PC-3 (cell line): ENCODE measurements at regions of chr2 and their contacts with region 1.

Region 1: DNA sequence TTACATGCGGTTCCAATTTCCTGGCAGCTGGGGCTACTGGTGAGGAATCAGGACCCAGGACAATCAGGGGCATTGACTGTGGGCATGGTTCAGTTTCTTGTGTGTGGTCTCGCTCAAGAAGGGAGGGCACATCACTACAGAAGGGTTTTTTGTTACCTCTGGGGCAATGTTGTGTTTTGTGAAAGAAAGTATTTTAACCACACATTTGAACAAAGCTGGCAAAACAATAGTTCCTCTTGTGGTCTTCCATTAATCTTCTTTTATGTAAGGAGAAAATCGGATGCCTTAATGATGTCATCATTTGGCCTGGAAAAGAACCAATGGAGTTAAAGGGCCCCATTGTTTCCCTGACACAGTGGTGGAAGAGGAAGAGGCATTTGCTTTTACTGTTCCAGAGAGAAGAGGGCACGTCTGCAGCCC is 197.4 kb downstream of the SH3BP4 start:
- DNase-seq: no peak
- ATAC-seq: no peak; the same call in 1 of the 2 replicates
- H3K4me3 ChIP-seq: no peak overlapping the region
- H3K27ac ChIP-seq: no peak overlapping the region
- H3K4me1 ChIP-seq: peaks cover 7% of the 10 kb centered on the region; the same call in 1 of the 2 replicates
- H3K27me3 ChIP-seq: no peaks in the 10 kb centered on the region
- CTCF ChIP-seq: no peak

Region 2: DNA sequence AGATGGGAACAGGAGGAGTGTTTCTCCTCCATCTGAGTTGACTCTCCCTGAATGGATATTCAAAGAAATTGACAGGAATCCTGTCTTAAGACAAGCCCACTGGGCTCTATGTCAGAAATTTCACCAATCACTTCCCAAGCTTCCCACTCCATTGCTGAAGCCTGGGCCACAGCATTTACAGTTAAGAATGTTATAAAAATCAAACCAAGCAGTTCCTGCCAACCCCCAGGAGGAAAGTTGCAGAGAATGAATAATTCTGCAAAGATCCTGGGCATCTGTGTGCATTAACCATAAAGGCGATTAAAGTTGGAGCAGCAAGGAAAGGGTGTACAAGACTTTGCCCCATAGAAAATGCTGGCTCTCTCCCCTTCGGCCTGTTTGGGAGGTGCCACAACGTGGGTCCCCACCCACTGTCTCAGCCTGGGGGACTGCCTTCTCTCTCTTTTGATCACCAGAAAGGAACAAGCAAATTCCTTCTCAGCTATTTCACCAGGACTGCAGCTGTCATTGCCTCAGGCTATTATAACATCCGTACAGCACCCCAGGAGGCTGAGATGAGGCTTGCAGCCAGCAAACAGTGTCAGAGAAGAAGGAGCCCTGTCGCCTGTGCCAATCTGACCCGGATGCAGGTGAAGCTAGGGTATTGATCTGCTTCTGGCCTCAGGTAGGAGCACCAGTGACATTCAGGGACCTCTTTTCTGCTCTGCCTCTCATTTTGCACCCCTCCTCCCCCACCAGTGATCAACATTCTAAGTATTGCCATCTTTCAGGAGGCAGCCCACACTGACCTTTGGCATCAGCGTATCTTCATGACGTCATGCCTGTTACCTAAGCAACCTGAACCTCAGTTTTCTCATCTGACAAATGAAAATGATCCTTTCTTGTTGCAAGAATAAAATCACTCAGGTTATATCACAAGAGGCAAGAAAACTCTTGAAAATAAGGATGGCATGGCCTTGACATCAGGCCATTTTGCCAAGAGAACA is 21.6 kb after region 1 on chr2:
- CTCF ChIA-PET with region 1: no interaction called
- POLR2A ChIA-PET with region 1: no interaction called
- intact Hi-C with region 1: loop called (anchors 1 kb)
- DNase-seq: peak; percentile 87
- ATAC-seq: peak; percentile 71
- H3K4me3 ChIP-seq: peak overlapping the region; percentile 34; the same call in 1 of the 2 replicates
- H3K27ac ChIP-seq: peak overlapping the region; percentile 98
- H3K4me1 ChIP-seq: peaks cover 36% of the 10 kb centered on the region
- H3K27me3 ChIP-seq: no peaks in the 10 kb centered on the region
- CTCF ChIP-seq: peak; percentile 43

Region 3: GRCh38 chr2:235238537-235238936 is 89.3 kb after region 1 on chr2:
- CTCF ChIA-PET with region 1: no interaction called
- POLR2A ChIA-PET with region 1: no interaction called
- intact Hi-C with region 1: no loop called
- DNase-seq: peak; percentile 10
- ATAC-seq: peak; percentile 29; the same call in 1 of the 2 replicates
- H3K4me3 ChIP-seq: no peak overlapping the region
- H3K27ac ChIP-seq: no peak overlapping the region
- H3K4me1 ChIP-seq: peaks cover 9% of the 10 kb centered on the region; the same call in 1 of the 2 replicates
- H3K27me3 ChIP-seq: no peaks in the 10 kb centered on the region
- CTCF ChIP-seq: no peak